ENCODE measurements at regions of chr1 and their contacts with region 1.

Region 1: DNA sequence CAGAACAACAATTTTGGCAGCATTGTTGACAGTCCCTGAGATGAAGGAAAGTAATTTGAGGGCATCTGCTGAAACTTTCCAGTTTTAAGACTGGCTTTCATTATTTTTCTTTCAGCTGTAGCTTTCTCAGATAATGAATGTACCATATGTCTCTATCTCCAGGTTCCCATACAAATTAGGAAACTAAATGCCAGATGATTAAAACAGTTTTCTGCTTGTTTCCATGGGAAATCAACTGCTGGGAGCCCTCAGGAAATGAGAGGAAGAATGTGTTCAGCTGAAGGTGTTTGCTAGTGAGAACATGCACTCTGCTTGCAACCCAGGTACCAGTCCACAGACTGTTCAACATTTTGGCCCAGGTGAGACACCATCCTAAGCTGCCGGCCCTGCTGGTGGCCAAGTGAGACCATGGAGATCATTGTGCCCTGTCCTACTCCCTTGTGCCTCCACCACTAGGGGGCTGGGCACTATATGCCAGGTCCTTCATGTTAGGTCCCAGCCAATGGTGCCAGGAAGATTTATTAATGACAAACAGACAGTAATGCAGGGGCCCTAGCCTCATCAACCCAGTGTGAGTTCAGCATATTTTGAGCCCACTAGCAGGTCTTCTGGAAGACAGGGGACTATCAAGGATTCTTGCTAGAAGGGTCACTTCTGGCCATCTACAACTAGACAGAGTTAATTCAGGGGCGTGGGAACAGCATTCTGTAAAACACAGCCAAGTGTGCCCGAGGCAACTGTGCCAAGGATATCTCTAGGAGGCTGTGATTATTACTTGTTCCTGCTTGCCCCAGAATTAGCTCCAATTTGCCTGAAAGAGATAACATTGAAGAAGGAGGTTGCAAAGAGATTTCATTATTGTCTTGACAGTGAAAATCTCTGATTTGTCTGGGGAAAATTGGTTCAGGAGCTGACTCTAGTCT is 17.0 kb upstream of the LRRC8C start:
- DNase-seq: peak; percentile 30
- H3K4me3 Mint-ChIP-seq: no peak overlapping the region
- H3K27ac Mint-ChIP-seq: no peak overlapping the region
- H3K4me1 Mint-ChIP-seq: peaks cover 58% of the 10 kb centered on the region
- H3K27me3 Mint-ChIP-seq: no peaks in the 10 kb centered on the region

Region 2: DNA sequence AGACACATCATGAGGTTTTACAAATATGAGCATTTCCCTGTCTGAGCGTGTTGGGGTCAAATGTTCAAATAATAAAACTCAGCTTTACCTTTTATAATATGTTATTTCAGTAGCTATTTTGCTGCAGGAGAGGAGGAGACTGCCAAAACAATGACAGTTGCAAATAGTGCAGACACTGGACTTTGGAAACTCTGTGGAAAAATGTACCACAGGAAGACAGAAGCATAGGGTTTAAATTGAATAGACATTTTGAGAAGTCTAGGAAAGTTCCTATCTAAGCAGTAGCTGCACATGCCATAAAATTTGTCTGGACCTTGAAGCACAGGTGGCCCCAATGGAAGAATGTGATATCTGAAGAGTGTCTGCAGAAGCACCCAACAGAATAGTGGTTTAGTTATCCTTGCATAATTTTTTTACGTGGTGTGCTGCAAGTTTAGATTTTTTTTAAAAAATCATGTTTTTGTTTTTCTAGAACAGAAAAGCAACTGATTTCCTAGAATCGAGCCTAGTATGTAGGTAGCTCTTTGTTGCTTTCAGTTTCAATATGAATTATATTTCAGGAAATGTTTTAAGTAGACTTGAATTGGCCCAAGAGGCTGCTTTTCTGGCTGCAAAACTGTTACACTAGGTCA is 329.3 kb before region 1 on chr1:
- CTCF ChIA-PET with region 1: no interaction called
- DNase-seq: peak; percentile 41
- H3K4me3 Mint-ChIP-seq: peak overlapping the region; percentile 28
- H3K27ac Mint-ChIP-seq: peak overlapping the region; percentile 96
- H3K4me1 Mint-ChIP-seq: peaks cover 82% of the 10 kb centered on the region
- H3K27me3 Mint-ChIP-seq: no peaks in the 10 kb centered on the region

Region 3: DNA sequence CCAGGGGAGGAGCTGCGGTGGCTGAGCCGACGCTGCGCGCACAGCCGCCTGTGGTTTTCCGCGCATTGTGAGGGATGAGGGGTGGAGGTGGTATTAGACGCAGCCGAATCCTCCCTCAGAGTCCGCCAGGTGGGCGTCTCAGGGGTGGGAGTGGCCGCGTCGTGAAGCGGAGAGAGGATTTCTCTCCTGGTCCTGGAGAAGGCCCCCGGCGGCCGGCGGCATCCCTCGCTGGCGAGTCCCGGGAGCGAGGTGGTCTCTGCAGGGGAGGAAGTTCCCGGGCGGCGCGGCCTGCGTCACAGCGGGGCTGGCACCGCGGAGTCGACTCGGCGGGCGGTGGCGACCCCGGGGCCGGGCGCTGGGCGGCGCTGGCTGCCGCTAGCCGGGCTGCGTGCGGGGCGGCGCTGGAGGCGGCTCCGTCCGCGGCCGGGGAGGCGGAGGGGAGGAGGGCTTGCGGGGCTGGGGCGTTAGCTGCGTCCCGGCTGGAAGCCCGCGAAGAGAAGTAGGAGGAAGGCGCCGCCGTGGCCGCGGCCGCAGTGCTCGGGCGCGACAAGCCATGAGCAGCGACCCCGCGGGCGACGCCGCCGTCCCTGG is 16.8 kb after region 1 on chr1 and contains the start of gene LRRC8C:
- CTCF ChIA-PET with region 1: interaction called, 53 read pairs
- DNase-seq: peak; percentile 89
- H3K4me3 Mint-ChIP-seq: peak within 1 kb of the TSS; percentile 91
- H3K27ac Mint-ChIP-seq: peak within 1 kb of the TSS; percentile 96
- H3K4me1 Mint-ChIP-seq: peaks cover 78% of the 10 kb centered on the region
- H3K27me3 Mint-ChIP-seq: peaks cover 4% of the 10 kb centered on the region

Region 4: GRCh38 chr1:89649783-89650182 is 33.8 kb after region 1 on chr1:
- CTCF ChIA-PET with region 1: no interaction called
- DNase-seq: no peak
- H3K4me3 Mint-ChIP-seq: no peak overlapping the region
- H3K27ac Mint-ChIP-seq: peak overlapping the region; percentile 7
- H3K4me1 Mint-ChIP-seq: peaks cover 64% of the 10 kb centered on the region
- H3K27me3 Mint-ChIP-seq: no peaks in the 10 kb centered on the region